CD4-positive, alpha-beta T cell (primary cell): ENCODE measurements at regions of chr13 and their contacts with region 1.

Region 1: GRCh38 chr13:114161644-114162532 is 17.2 kb upstream of the CFAP97D2 start:
- DNase-seq: peak in 13 of 14 experiments; percentile 30 to 73 (median 49)
- ATAC-seq: peak; percentile 78
- H3K4me3 ChIP-seq: peak overlapping the region; percentile 43
- H3K4me3 Mint-ChIP-seq: peak overlapping the region; percentile 82
- H3K27ac ChIP-seq: peak overlapping the region; percentile 42 to 70
- H3K27ac Mint-ChIP-seq: peak overlapping the region; percentile 93
- H3K4me1 ChIP-seq: peaks cover 80% of the 10 kb centered on the region
- H3K4me1 Mint-ChIP-seq: peaks cover 92% of the 10 kb centered on the region
- H3K27me3 ChIP-seq: no peaks in the 10 kb centered on the region
- H3K27me3 Mint-ChIP-seq: no peaks in the 10 kb centered on the region
- CTCF ChIP-seq: no peak

Region 2: DNA sequence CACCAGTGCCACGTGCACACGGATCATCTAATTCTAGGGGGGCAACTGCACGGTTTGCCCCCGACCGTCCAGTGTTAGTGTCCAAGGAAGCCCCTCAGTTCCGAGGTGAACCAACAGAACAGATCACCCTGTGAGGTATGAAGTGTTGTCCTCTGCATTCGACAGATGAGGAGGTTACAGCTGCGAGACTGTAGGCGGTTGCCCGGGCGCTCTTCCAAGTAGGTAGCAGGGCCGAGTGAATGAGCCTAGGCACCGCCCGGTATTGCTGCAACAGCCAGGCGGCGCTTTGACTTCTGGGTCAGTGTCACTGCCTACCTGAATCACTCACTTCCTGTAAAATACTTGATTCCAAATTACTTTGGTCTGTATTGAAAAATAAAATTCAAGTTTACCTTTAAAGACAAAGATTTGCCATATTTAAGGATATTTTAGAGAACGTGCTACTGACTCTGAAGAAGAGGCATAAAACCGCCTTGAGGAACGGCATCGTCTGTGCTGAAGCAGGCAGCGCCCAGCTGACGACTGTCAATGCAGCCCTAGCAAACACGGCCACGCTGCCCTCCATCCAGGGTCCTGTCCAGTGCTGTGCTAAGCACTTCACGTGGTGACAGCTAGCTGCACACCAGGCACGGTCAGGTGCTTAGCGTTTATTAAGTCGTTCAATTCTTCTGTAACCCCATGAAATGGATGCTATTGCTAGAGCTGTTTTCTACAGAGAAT is 10.2 kb before region 1 on chr13:
- CTCF ChIA-PET with region 1: interaction called, 5 read pairs
- POLR2A ChIA-PET with region 1: interaction called, 50 read pairs
- intact Hi-C with region 1: loop called in 1 of 2 experiments (anchors 2 kb)
- DNase-seq: peak in 13 of 14 experiments; percentile 54 to 82 (median 67)
- ATAC-seq: peak; percentile 31
- H3K4me3 ChIP-seq: peak overlapping the region; percentile 28
- H3K4me3 Mint-ChIP-seq: peak overlapping the region; percentile 81
- H3K27ac ChIP-seq: peak overlapping the region; percentile 79 to 92
- H3K27ac Mint-ChIP-seq: peak overlapping the region; percentile 95
- H3K4me1 ChIP-seq: peaks cover 84% of the 10 kb centered on the region
- H3K4me1 Mint-ChIP-seq: peaks cover 80% of the 10 kb centered on the region
- H3K27me3 ChIP-seq: no peaks in the 10 kb centered on the region
- H3K27me3 Mint-ChIP-seq: no peaks in the 10 kb centered on the region
- CTCF ChIP-seq: no peak

Region 3: GRCh38 chr13:114194853-114195252 is 33.0 kb after region 1 on chr13:
- CTCF ChIA-PET with region 1: no interaction called
- POLR2A ChIA-PET with region 1: interaction called, 3 read pairs
- intact Hi-C with region 1: loop called in 1 of 2 experiments (anchors 2 kb)
- DNase-seq: peak in 2 of 14 experiments; percentile 7 to 68
- ATAC-seq: peak; percentile 51
- H3K4me3 ChIP-seq: no peak overlapping the region
- H3K4me3 Mint-ChIP-seq: no peak overlapping the region
- H3K27ac ChIP-seq: no peak overlapping the region
- H3K27ac Mint-ChIP-seq: no peak overlapping the region
- H3K4me1 ChIP-seq: peaks cover 10% of the 10 kb centered on the region
- H3K4me1 Mint-ChIP-seq: peaks cover 19% of the 10 kb centered on the region
- H3K27me3 ChIP-seq: no peaks in the 10 kb centered on the region
- H3K27me3 Mint-ChIP-seq: no peaks in the 10 kb centered on the region
- CTCF ChIP-seq: no peak

Region 4: GRCh38 chr13:114200399-114200911 is 38.6 kb after region 1 on chr13:
- CTCF ChIA-PET with region 1: no interaction called
- POLR2A ChIA-PET with region 1: no interaction called
- intact Hi-C with region 1: loop called in 1 of 2 experiments (anchors 2 kb)
- DNase-seq: no peak
- ATAC-seq: no peak
- H3K4me3 ChIP-seq: no peak overlapping the region
- H3K4me3 Mint-ChIP-seq: no peak overlapping the region
- H3K27ac ChIP-seq: no peak overlapping the region
- H3K27ac Mint-ChIP-seq: no peak overlapping the region
- H3K4me1 ChIP-seq: peaks cover 16% of the 10 kb centered on the region
- H3K4me1 Mint-ChIP-seq: peaks cover 42% of the 10 kb centered on the region
- H3K27me3 ChIP-seq: no peaks in the 10 kb centered on the region
- H3K27me3 Mint-ChIP-seq: no peaks in the 10 kb centered on the region
- CTCF ChIP-seq: no peak